Activated T-helper 2 cell treated with anti-CD3 and anti-CD28 coated beads, Interferon-gamma antibody, Interleukin-2, Interleukin-4, amounts not matched to agents 10 μg/mL and 5 μg/mL and 100 μg/mL, durations not matched to agents 14 hours and 24 hours and 36 hours (primary cell): ENCODE measurements at regions of chr7 and their contacts with region 1.

Region 1: GRCh38 chr7:24757353-24758275 is at the start of gene GSDME:
- DNase-seq: peak; percentile 24
- H3K4me3 Mint-ChIP-seq: peak within 1 kb of the TSS; percentile 87
- H3K27ac Mint-ChIP-seq: peak within 1 kb of the TSS; percentile 80
- H3K4me1 Mint-ChIP-seq: peaks cover 33% of the 10 kb centered on the region
- H3K27me3 Mint-ChIP-seq: peaks cover 52% of the 10 kb centered on the region
- total RNA-seq, gene GSDME: 8.7 and 9.6 TPM in 2 replicates

Region 2: DNA sequence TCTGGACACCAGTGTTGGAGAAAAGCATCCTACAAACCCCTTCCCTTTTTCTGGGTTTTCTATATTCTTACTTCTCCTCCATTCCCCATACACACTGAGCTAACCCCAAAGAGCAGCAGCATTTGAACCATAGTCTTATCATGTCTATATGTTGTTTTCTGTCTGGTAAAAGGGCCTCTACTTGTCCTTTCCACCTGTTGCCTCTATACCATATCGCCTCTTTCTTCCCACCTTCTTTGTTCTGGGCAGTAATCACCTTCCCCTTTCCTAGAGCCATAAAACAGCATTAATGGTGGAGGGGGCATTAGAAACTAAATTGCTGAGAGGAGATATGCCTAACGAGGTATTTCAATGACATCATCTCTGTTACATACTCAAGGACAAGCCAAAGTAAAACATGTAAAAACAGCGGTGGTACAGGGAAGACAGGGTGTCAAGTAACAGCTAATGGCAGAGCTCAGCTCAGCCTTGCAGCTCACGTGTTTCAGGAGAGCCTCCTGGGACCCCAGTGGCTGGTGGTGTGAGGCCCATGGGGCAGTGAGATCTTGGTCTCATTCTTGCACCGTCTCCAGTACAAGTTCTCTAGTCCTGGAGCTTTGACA is 453.0 kb before region 1 on chr7:
- intact Hi-C with region 1: no loop called
- DNase-seq: no peak
- H3K4me3 Mint-ChIP-seq: no peak overlapping the region
- H3K27ac Mint-ChIP-seq: no peak overlapping the region
- H3K4me1 Mint-ChIP-seq: no peaks in the 10 kb centered on the region
- H3K27me3 Mint-ChIP-seq: peaks cover 35% of the 10 kb centered on the region

Region 3: GRCh38 chr7:24572997-24573625 is 184.5 kb before region 1 on chr7 and contains the start of gene PALS2:
- intact Hi-C with region 1: loop called (anchors 5 kb)
- DNase-seq: peak; percentile 75
- H3K4me3 Mint-ChIP-seq: peak within 1 kb of the TSS; percentile 96
- H3K27ac Mint-ChIP-seq: peak within 1 kb of the TSS; percentile 89
- H3K4me1 Mint-ChIP-seq: peaks cover 26% of the 10 kb centered on the region
- H3K27me3 Mint-ChIP-seq: peaks cover 45% of the 10 kb centered on the region
- total RNA-seq, gene PALS2: 30.6 and 35.2 TPM in 2 replicates

Region 4: DNA sequence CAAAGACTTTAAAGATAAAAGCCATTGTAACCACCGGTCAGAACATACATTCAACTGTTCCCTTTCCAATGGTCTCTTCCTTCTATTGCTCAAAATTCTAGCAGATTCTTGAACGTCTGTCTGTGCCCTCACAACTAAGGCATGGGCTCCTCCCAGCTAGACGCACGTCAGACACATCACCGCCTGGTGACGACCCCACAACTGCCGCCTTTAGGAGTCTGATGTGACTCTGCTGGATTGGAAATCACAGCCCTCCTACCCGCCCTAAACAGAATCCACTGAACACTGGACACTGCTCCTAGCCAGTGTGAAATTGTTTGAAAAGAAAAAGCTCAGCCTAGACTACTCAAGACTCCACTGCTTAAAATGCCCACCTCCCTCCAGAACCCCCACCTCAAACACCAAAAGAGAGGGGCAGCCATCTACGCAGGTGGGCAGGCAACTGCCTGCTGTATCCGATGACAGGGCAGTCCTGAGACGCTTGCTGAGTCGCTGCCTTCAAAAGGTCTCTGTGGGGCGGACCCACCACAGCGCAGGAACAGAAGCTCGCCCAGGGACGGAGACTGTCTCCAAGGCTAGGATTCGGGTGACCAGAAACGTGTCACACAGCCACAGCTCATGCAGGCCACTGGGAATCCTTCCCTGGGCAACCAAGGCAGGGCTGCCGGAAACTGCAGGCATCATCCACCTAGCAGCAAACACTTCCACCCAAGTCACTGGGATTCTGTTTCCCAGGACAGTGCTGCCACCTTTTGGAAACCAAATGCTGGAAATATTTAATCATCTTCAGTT is 35.0 kb before region 1 on chr7:
- intact Hi-C with region 1: loop called (anchors 1 kb)
- DNase-seq: no peak
- H3K4me3 Mint-ChIP-seq: no peak overlapping the region
- H3K27ac Mint-ChIP-seq: no peak overlapping the region
- H3K4me1 Mint-ChIP-seq: peaks cover 11% of the 10 kb centered on the region
- H3K27me3 Mint-ChIP-seq: no peaks in the 10 kb centered on the region

Region 5: DNA sequence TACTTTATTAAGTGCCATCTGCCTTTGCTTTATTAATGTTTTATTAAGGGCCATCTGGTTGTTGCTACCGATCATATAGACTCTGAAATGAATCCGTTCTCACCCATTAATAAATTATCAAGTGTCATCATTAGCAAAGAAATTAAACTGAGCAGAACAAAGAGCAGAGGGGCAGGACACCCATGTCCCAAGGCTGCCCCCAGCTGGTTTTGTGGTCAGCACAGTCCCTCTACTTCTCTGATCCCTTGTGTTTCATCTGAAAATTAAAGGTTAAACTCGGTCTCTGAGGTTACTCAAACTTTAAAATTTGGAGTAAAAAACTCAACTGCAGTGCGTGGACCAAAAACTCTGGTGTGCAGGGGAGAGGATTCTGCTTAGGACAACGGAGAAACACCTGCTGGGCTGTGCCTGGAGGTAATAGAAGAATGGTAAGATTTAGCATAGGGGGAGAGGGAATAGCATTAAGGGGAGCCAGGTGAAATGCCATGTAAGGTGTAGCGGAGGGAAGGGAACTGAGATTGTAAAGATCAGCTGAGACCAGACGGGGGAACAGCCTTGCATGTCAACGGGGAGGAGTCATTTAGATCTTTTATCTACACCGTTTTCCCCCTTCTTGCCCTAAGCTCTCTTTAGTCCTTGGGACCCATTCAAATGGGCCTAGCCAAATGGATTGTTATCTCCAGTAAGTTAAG is 10.4 kb after region 1 on chr7:
- intact Hi-C with region 1: no loop called
- DNase-seq: no peak
- H3K4me3 Mint-ChIP-seq: no peak overlapping the region
- H3K27ac Mint-ChIP-seq: no peak overlapping the region
- H3K4me1 Mint-ChIP-seq: peaks cover 21% of the 10 kb centered on the region
- H3K27me3 Mint-ChIP-seq: peaks cover 27% of the 10 kb centered on the region

Region 6: GRCh38 chr7:24825931-24826661 is 68.5 kb after region 1 on chr7:
- intact Hi-C with region 1: no loop called
- DNase-seq: no peak
- H3K4me3 Mint-ChIP-seq: peak overlapping the region; percentile 20
- H3K27ac Mint-ChIP-seq: peak overlapping the region; percentile 76
- H3K4me1 Mint-ChIP-seq: peaks cover 78% of the 10 kb centered on the region
- H3K27me3 Mint-ChIP-seq: no peaks in the 10 kb centered on the region

Region 7: DNA sequence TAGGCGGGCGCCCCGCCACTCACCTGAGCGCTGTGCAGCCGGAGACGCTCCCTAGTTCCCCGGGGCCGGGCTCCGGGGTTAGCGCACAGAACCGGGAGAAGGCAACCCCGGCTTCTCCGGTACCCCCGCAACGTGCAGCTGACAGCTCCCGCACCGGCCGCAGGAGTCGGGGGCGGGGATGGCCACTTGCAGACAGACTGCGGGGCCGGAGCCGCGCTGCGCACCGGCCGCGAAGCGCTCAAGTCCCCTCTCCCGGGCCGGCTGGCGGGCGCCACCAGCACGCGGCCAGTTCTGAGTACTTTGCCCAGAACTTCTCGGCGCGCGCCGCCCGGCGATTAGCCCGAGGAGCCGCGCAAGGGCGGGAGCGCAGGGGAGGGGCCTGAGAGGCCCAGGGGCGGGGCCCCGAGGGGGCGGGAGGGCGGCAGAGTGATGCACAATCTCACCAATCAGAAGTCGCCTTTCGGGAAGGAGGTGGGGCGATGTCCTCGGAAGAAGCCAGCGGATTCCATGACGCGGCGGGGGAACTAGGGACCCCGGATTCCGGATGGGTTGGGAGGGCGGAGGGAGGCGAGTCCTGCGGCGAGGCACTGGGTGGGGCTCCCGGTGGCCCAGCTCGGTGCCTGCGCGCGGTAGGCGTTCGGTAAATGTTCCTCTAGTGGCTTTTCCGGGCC is 222.4 kb after region 1 on chr7 and contains the start of gene OSBPL3:
- intact Hi-C with region 1: loop called (anchors 5 kb)
- DNase-seq: peak; percentile 92
- H3K4me3 Mint-ChIP-seq: peak within 1 kb of the TSS; percentile 95
- H3K27ac Mint-ChIP-seq: peak within 1 kb of the TSS; percentile 97
- H3K4me1 Mint-ChIP-seq: peaks cover 60% of the 10 kb centered on the region
- H3K27me3 Mint-ChIP-seq: no peaks in the 10 kb centered on the region
- total RNA-seq, gene OSBPL3: 74.2 and 76.2 TPM in 2 replicates

Region 8: GRCh38 chr7:25125137-25125946 is 367.7 kb after region 1 on chr7 and contains the start of gene CYCS:
- intact Hi-C with region 1: loop called (anchors 1 kb)
- DNase-seq: peak; percentile 99
- H3K4me3 Mint-ChIP-seq: peak within 1 kb of the TSS; percentile 94
- H3K27ac Mint-ChIP-seq: peak within 1 kb of the TSS; percentile 97
- H3K4me1 Mint-ChIP-seq: peaks cover 24% of the 10 kb centered on the region
- H3K27me3 Mint-ChIP-seq: no peaks in the 10 kb centered on the region
- total RNA-seq, gene CYCS: 235 and 251 TPM in 2 replicates